ENCODE measurements at regions of chrX and their contacts with region 1.

Region 1: DNA sequence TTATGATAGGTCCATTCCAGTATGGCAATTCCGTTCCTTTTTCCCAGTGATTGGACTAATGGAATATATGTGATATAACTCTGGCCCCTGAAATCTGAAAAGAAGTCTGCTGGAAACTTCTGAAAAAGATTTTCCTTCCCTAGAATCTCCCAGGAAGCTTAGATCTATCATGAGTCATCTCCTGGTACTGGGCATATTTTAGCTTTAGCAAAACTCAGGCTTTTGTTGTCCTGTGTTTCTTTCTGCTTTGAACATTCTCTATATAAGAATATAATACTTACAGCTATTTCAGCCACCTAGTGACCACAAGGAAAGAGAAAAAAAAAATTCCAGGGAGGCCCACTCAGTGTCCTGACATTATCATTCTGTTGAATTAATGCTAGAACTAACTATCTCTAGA is 597.2 kb upstream of the GRIA3 start:
- DNase-seq: no peak
- H3K4me3 ChIP-seq: no peak overlapping the region
- H3K27ac ChIP-seq: no peak overlapping the region
- H3K4me1 ChIP-seq: no peaks in the 10 kb centered on the region
- H3K27me3 ChIP-seq: no peaks in the 10 kb centered on the region
- CTCF ChIP-seq: no peak
- POLR2A ChIP-seq: no peak

Region 2: GRCh38 chrX:121671649-121672048 is 915.2 kb before region 1 on chrX:
- intact Hi-C with region 1: no loop called
- DNase-seq: no peak
- H3K4me3 ChIP-seq: no peak overlapping the region
- H3K27ac ChIP-seq: no peak overlapping the region
- H3K4me1 ChIP-seq: no peaks in the 10 kb centered on the region
- H3K27me3 ChIP-seq: no peaks in the 10 kb centered on the region
- CTCF ChIP-seq: no peak
- POLR2A ChIP-seq: no peak

Region 3: GRCh38 chrX:122596998-122597397 is 10.2 kb after region 1 on chrX:
- intact Hi-C with region 1: loop called (anchors 1 kb)
- DNase-seq: no peak
- H3K4me3 ChIP-seq: no peak overlapping the region
- H3K27ac ChIP-seq: no peak overlapping the region
- H3K4me1 ChIP-seq: no peaks in the 10 kb centered on the region
- H3K27me3 ChIP-seq: no peaks in the 10 kb centered on the region
- CTCF ChIP-seq: no peak
- POLR2A ChIP-seq: no peak